Panc1 (cell line): ENCODE measurements at regions of chr12 and their contacts with region 1.

Region 1: DNA sequence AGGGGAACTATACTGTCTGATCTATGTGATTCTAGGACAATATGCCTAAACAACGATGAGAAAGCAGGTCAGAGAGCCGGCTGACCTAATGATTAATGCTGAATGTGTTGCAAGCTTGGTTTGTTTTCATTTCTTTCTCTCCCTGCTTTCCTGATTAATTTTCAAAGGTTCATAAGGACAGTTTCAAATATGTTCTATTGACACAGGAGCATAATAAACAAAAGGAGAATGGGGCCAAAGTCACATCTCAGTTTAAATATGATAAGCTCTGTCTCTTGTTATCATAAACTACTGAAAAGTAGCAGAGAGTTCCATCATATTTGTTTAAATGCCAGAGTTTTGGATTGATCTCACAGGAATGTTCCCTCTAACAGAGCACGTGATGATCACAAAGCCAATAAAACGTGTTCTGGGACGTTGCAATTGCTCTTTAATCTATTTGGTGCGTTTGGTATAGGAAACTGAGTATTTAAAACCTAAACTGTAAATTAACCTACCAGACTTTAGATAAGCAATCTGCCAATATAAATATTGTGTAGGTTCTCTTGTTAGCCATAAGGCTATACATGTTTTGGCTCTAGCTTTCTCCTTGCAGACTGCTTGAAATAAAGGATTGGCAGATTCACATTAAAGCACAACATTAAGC is 3.7 kb upstream of the HSD17B6 start:
- DNase-seq: no peak
- ATAC-seq: no peak
- H3K4me3 ChIP-seq: no peak overlapping the region
- H3K27ac ChIP-seq: no peak overlapping the region
- H3K4me1 ChIP-seq: no peaks in the 10 kb centered on the region
- H3K27me3 ChIP-seq: no peaks in the 10 kb centered on the region
- CTCF ChIP-seq: no peak

Region 2: GRCh38 chr12:56987551-56988053 is 228.2 kb after region 1 on chr12:
- CTCF ChIA-PET with region 1: interaction called, 8 read pairs
- POLR2A ChIA-PET with region 1: no interaction called
- in situ Hi-C with region 1: no loop called
- intact Hi-C with region 1: loop called (anchors 2 kb)
- DNase-seq: peak; percentile 39
- ATAC-seq: peak; percentile 91
- H3K4me3 ChIP-seq: no peak overlapping the region
- H3K27ac ChIP-seq: no peak overlapping the region
- H3K4me1 ChIP-seq: no peaks in the 10 kb centered on the region
- H3K27me3 ChIP-seq: no peaks in the 10 kb centered on the region; the same call in 1 of the 2 replicates
- CTCF ChIP-seq: peak; percentile 97

Region 3: DNA sequence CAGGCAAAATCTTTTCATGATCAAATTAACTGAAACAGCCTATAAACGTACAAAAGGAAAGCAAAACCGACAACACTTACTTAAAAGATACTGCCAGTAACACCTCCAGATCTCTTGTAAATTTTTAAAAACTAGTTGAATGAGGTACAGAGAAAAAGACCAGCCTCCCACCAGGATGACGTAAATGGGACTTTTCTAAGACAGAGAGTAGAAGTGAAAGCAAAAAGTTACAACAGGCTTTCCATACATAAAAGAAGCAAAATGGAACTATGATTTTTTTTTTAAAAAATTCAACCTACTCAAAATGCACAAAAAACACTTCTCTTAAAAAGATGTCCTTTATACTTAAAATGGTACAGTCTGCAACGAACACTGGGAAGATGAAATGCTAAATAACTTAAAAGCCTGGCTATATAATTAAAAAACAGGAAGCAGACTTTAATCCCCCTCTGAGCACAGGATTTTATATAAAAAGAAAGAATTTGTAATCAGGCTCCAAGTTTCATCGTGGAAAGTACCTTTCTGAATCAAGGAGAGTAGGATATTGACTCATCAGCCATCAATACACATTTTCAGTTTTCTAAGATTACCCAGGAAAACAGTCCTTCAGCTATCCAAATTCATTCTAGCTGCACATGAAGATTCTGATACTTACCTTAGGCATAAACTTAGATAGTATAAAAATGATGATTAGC is 304.8 kb after region 1 on chr12:
- CTCF ChIA-PET with region 1: no interaction called
- POLR2A ChIA-PET with region 1: no interaction called
- in situ Hi-C with region 1: no loop called
- intact Hi-C with region 1: loop called (anchors 5 kb)
- DNase-seq: no peak
- ATAC-seq: no peak
- H3K4me3 ChIP-seq: no peak overlapping the region
- H3K27ac ChIP-seq: no peak overlapping the region
- H3K4me1 ChIP-seq: no peaks in the 10 kb centered on the region
- H3K27me3 ChIP-seq: no peaks in the 10 kb centered on the region
- CTCF ChIP-seq: no peak